AG04449 (cell line): ENCODE measurements at regions of chr3 and their contacts with region 1.

Region 1: DNA sequence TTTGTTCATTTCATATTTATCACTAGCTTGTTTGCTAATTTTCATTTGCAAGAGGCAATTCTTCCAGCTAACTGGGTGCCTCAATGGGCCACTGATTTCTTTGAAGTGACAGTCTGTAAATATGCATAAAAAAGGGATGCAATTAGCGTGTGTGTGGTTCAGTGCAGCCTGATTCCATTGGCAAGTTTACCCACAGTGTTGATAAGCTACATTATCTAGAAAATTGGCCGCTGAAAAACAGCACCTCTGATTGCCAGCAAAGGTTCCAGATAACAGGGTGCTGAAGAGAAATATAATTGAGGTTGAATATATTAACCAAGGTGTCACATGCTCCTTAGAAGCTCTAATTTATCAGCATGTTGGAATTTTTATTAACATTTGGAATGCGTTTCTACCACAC is 76.9 kb downstream of the SAMMSON start:
- DNase-seq: no peak
- H3K4me3 ChIP-seq: no peak overlapping the region
- CTCF ChIP-seq: no peak

Region 2: GRCh38 chr3:69986419-69986818 is 90.0 kb before region 1 on chr3:
- CTCF ChIA-PET with region 1: no interaction called
- POLR2A ChIA-PET with region 1: no interaction called
- DNase-seq: no peak
- H3K4me3 ChIP-seq: no peak overlapping the region
- CTCF ChIP-seq: no peak

Region 3: GRCh38 chr3:70064194-70064779 is 12.1 kb before region 1 on chr3:
- CTCF ChIA-PET with region 1: interaction called, 13 read pairs
- POLR2A ChIA-PET with region 1: no interaction called
- DNase-seq: no peak
- H3K4me3 ChIP-seq: no peak overlapping the region
- CTCF ChIP-seq: peak; percentile 57